ENCODE measurements at regions of chr7 and their contacts with region 1.

Region 1: GRCh38 chr7:150988230-150989226 is 2.3 kb upstream of the NOS3 start:
- DNase-seq: peak; percentile 79
- H3K4me3 Mint-ChIP-seq: no peak overlapping the region
- H3K27ac Mint-ChIP-seq: no peak overlapping the region
- H3K4me1 Mint-ChIP-seq: peaks cover 22% of the 10 kb centered on the region
- H3K27me3 Mint-ChIP-seq: no peaks in the 10 kb centered on the region

Region 2: DNA sequence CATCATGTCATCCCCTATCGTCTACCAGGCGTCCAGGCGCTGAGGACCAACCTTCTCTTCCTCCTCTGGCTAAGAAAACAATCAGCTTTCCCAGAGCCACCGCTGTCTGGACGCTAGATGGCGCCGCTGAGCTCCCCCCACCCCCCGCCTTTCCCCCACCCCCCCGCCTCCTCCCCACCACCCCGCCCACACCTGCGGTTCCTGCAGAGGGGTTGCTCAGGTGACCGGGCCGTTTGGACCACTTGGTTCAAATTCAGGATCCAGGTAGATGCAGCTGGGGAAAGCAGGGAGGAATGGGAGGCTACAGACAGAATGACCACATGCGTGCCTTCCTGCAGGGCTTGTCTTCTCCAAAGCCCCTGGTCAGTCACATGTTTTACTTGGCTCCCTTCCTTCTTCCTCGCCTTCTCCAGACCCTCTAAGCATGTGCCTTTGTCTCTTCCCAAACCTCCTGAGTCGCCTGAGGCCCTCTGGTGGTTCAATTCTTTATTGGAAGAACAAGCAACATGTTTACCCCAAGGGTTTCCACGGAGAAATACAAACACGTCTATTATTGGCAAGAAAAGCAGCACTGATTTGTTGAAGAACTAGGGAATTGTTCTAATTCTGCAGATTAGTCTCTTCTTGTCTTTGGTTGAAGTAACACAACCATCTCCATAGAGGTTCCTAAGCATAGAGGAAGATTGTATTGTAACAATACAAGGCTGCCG is 111.6 kb before region 1 on chr7:
- CTCF ChIA-PET with region 1: interaction called, 15 read pairs
- POLR2A ChIA-PET with region 1: no interaction called
- intact Hi-C with region 1: no loop called
- DNase-seq: peak; percentile 66
- H3K4me3 Mint-ChIP-seq: no peak overlapping the region
- H3K27ac Mint-ChIP-seq: no peak overlapping the region
- H3K4me1 Mint-ChIP-seq: peaks cover 11% of the 10 kb centered on the region
- H3K27me3 Mint-ChIP-seq: no peaks in the 10 kb centered on the region

Region 3: GRCh38 chr7:150962553-150963399 is 25.8 kb before region 1 on chr7:
- CTCF ChIA-PET with region 1: interaction called, 108 read pairs
- POLR2A ChIA-PET with region 1: no interaction called
- intact Hi-C with region 1: loop called (anchors 1 kb)
- DNase-seq: peak; percentile 66
- H3K4me3 Mint-ChIP-seq: no peak overlapping the region
- H3K27ac Mint-ChIP-seq: no peak overlapping the region
- H3K4me1 Mint-ChIP-seq: peaks cover 6% of the 10 kb centered on the region
- H3K27me3 Mint-ChIP-seq: peaks cover 20% of the 10 kb centered on the region

Region 4: DNA sequence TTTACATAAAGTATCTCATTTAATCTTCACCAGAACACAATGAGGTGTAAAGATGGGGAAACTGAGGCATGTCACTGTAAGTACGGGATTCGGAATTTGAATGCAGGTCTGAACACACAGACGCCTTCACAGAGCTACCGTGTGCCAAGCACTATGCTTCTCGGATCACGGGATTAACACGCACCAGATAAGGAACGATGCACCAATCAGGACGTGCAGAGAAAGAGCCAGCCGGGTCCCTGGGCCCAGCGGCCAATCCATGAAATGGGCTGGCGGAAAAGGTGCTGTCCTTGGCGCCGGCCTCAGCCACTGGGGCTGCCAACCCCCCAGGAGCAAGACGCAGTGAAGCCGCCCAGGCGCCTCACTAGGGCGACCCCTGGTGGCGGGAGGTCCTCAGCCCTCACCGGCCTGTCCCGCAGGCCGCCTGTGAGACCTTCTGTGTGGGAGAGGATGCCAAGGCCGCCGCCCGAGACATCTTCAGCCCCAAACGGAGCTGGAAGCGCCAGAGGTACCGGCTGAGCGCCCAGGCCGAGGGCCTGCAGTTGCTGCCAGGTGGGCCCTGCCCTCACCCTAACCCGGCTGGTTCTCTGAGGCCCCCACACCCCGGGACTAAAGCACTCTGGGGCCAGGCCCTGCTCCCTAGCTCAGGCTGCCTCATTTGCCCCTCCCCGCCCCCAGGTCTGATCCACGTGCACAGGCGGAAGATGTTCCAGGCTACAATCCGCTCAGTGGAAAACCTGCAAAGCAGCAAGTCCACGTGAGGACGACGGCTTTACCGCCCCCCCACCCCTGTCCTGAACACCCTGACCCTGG is 20.2 kb after region 1 on chr7:
- CTCF ChIA-PET with region 1: interaction called, 18 read pairs
- POLR2A ChIA-PET with region 1: no interaction called
- intact Hi-C with region 1: no loop called
- DNase-seq: peak; percentile 82
- H3K4me3 Mint-ChIP-seq: peak overlapping the region; percentile 71
- H3K27ac Mint-ChIP-seq: peak overlapping the region; percentile 82
- H3K4me1 Mint-ChIP-seq: peaks cover 57% of the 10 kb centered on the region
- H3K27me3 Mint-ChIP-seq: no peaks in the 10 kb centered on the region

Measured in activated CD4-positive, alpha-beta memory T cell treated with anti-CD3 and anti-CD28 coated beads for 36 hours (primary cell).